Posterior cingulate gyrus (tissue), 11 donors: ENCODE measurements at regions of chr14 and their contacts with region 1.

Region 1: GRCh38 chr14:100192672-100193416 is 33.4 kb upstream of the DEGS2 start:
- DNase-seq: peak; percentile 96 to 100 (median 99)

Region 2: DNA sequence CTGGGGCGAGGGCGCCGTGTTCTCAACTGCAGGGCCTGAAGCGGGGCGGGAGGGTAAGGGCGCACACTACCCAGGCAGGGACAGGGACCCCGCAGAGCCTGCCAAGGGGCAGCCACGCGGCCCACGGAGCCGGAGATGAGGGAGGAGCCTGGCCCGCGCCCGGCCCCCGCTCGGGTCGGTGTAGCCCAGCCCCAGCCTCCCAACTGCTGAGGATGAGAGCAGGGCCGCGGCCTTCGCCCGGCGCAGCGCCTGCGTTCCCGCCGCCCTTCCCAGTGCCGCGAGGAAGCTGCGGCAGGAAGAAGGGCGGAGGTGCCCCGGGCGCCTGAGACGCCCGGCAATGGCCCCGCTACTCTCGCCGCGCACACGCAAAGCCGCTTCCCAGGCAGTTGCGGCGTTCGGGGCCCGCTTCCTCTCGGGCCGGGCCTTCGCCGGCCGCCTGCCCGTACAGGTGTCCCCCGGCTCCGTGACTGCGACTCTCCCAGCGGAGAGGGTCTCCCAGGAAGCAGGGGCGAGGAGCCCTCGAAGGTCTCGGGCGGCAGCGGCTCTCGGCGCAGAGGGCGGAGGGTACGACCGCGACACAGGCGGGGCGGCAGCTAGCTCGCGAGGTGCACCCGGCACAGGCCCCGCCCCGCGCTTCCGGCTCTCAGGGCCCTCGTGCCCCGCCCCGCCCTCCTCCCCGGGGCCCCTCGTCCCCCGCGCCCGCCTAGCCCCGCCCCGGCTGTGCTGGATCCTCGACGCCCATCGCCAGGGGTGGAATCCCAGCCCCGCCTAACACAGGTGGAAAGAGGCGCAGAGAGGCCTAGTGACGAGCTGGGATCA is 21.3 kb after region 1 on chr14:
- intact Hi-C with region 1: loop called (anchors 2 kb)
- DNase-seq: peak; percentile 47 to 96 (median 69)